HCT116 (cell line): ENCODE measurements at regions of chr5 and their contacts with region 1.

Region 1: GRCh38 chr5:902129-902916 is 9.6 kb downstream of the TRIP13 start:
- DNase-seq: no peak
- ATAC-seq: no peak
- H3K4me3 ChIP-seq: no peak overlapping the region
- H3K27ac ChIP-seq: no peak overlapping the region
- H3K4me1 ChIP-seq: no peaks in the 10 kb centered on the region
- H3K27me3 ChIP-seq: no peaks in the 10 kb centered on the region
- CTCF ChIP-seq: no peak
- POLR2A ChIP-seq: no peak
- RAD21 ChIP-seq: no peak

Region 2: GRCh38 chr5:442335-443238 is 459.7 kb before region 1 on chr5 and contains the start of gene EXOC3:
- CTCF ChIA-PET with region 1: interaction called, 5 read pairs
- POLR2A ChIA-PET with region 1: no interaction called
- RAD21 ChIA-PET with region 1: no interaction called
- intact Hi-C with region 1: loop called (anchors 10 kb)
- DNase-seq: peak; percentile 34
- ATAC-seq: peak; percentile 87
- H3K4me3 ChIP-seq: peak within 1 kb of the TSS; percentile 98 to 99
- H3K27ac ChIP-seq: peak within 1 kb of the TSS; percentile 86
- H3K4me1 ChIP-seq: peaks cover 12 to 30% of the 10 kb centered on the region in 2 experiments
- H3K27me3 ChIP-seq: no peaks in the 10 kb centered on the region
- CTCF ChIP-seq: no peak
- POLR2A ChIP-seq: peak; percentile 71
- RAD21 ChIP-seq: no peak
- total RNA-seq, gene EXOC3: 52.4 TPM

Region 3: DNA sequence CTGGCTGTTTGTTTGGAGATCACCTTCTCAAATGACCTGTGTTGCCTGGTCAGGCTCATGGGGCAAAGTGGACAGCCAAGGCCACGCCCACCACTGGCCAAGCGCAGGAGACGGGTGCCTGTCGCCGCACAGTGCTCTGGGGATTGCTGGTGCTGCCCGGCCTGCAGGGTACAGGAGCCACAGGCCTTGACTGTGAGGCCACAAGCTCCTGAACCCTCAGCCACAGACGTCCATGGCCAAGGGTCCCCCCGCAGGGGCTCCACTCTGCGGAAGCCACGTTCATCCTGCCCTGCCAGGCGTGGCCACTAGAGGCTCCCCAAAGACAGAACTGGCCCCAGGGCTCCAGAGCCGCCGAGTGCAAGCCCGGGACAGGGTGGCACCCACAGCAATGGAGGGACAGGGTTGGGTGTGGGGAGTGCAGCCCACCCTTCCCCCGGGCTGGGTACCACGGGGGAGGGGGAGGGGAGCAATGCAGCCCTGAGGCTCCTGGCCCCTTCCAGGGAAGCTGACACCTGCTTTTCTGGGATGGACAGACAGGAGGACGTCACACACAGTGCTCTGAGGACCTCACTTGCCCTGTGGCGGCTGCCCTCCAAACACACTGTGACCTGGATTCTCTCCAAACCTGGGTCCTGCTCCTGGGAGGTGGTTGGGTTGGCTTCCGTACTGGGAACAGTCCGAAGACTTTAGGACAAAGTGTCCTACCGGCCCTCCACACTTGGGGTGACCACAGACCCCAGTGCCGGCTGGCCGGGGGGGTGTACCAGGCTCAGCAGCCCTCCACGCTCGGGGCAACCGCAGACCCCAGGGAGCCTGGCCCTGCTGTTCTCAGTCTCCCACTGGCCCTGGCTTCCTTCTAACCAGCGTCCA is 230.6 kb before region 1 on chr5:
- CTCF ChIA-PET with region 1: interaction called, 10 read pairs
- POLR2A ChIA-PET with region 1: no interaction called
- RAD21 ChIA-PET with region 1: no interaction called
- intact Hi-C with region 1: loop called (anchors 2 kb)
- DNase-seq: no peak
- ATAC-seq: peak; percentile 77
- H3K4me3 ChIP-seq: no peak overlapping the region
- H3K27ac ChIP-seq: no peak overlapping the region
- H3K4me1 ChIP-seq: peaks cover 0 to 33% of the 10 kb centered on the region in 2 experiments; a peak in 2 of 4 replicates
- H3K27me3 ChIP-seq: no peaks in the 10 kb centered on the region
- CTCF ChIP-seq: peak; percentile 86 to 93 (median 92)
- POLR2A ChIP-seq: no peak
- RAD21 ChIP-seq: peak; percentile 95